Right cardiac atrium (tissue), 5 donors: ENCODE measurements at regions of chr13 and their contacts with region 1.

Region 1: DNA sequence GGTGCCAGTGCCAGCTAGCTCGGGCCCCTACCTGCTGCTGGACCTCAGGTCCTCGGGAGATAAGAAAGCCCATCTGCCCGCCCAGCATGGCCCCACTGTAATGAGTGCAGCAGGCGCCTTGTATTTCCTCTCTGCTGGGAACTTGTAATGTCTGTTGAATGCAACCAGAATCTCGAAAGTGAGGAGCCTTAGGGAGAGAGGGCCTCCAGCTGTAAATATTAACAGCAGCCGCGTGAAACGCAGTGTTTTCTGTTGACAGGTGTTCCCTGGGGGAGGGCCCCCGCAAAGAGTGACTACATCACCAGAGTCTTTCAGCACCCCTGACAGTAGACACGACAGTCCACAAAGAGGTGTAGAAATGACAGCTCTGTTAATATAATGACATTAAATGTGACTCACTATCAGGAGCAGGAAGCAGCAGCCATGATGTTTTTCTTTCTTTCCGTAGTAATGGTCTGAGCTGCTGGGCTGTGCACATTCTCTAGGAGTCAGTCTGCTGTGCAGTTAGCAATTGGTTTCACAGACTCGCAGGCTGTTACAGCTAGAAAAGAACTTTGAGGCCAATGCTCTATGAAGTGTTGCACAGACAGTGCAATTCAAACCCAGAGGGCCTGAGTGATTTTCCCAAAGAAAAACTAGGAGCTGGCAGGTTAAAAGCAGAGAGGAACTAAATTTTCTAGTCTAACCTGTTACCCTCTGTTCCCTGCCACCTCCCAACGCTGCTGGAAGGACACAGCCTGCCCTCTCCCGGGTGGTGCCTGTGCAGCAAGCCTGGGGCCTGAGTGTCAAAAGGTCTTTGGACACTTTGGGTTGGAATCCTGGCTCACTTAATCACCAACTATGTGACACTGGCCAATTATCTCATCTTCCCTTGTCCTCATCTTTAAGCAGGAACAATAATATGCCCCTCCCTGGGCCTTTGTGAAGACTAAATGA is 58.6 kb upstream of the WASF3 start:
- DNase-seq: no peak
- ATAC-seq: no peak
- H3K4me3 ChIP-seq: no peak overlapping the region
- H3K27ac ChIP-seq: no peak overlapping the region
- H3K4me1 ChIP-seq: no peaks in the 10 kb centered on the region
- H3K27me3 ChIP-seq: no peaks in the 10 kb centered on the region

Region 2: GRCh38 chr13:26186118-26186870 is 312.6 kb before region 1 on chr13:
- intact Hi-C with region 1: loop called in 3 of 4 experiments (anchors 2 to 5 kb)
- DNase-seq: peak; percentile 90 to 96 (median 95)
- ATAC-seq: peak; percentile 97 to 98
- H3K4me3 ChIP-seq: peak overlapping the region; percentile 56
- H3K27ac ChIP-seq: peak overlapping the region; percentile 55
- H3K4me1 ChIP-seq: no peaks in the 10 kb centered on the region
- H3K27me3 ChIP-seq: no peaks in the 10 kb centered on the region

Region 3: DNA sequence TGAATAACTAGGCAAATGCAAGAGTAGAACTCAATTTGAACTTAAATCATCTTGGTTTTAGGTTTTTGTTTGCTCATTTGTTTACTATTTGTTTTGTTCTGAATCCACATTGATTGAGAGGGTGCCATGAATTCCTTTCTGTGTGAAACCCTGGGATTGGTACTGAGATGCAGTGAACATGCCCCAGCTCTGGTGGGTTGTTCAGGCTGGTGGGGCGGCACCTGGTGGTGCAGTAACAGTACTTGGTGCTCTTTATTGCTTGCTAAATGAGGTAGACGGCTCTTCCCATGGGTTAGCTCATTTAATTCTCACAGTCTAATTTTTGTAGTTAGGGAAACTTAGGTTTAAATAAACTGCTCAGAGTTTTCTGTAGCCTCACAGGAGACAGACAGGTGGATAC is 106.9 kb after region 1 on chr13:
- intact Hi-C with region 1: no loop called
- DNase-seq: no peak
- ATAC-seq: no peak
- H3K4me3 ChIP-seq: no peak overlapping the region
- H3K27ac ChIP-seq: no peak overlapping the region
- H3K4me1 ChIP-seq: peaks cover 4% of the 10 kb centered on the region
- H3K27me3 ChIP-seq: no peaks in the 10 kb centered on the region

Region 4: GRCh38 chr13:26663791-26664190 is 164.9 kb after region 1 on chr13:
- intact Hi-C with region 1: no loop called
- DNase-seq: no peak
- ATAC-seq: no peak
- H3K4me3 ChIP-seq: no peak overlapping the region
- H3K27ac ChIP-seq: no peak overlapping the region
- H3K4me1 ChIP-seq: peaks cover 3% of the 10 kb centered on the region
- H3K27me3 ChIP-seq: no peaks in the 10 kb centered on the region